ENCODE measurements at regions of chr2 and their contacts with region 1.

Region 1: DNA sequence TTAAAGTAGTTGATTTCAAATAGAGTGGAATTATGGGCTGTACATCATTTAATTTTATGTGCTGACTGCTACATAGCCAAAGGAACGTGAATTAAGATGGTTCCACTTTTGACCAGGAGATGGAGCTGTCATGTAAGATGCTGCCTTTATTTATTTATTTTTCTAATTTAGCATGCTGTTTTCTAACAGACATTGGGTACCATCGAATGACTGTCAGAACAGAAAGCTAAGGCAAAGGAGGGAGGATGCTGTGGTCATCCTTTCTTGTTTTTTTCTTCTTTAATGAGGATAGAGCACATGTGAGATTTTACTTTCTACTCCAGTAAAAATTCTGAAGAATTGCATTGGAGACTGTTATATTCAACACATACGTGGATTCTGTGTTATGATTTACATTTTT is at the start of gene SCN2A:
- DNase-seq: peak; percentile 35
- H3K4me3 ChIP-seq: no peak within 1 kb of the TSS
- H3K27ac ChIP-seq: no peak within 1 kb of the TSS
- H3K4me1 ChIP-seq: no peaks in the 10 kb centered on the region
- H3K27me3 ChIP-seq: no peaks in the 10 kb centered on the region
- CTCF ChIP-seq: peak; percentile 74 to 75
- total RNA-seq, gene SCN2A: 2.8 to 7.0 TPM

Region 2: DNA sequence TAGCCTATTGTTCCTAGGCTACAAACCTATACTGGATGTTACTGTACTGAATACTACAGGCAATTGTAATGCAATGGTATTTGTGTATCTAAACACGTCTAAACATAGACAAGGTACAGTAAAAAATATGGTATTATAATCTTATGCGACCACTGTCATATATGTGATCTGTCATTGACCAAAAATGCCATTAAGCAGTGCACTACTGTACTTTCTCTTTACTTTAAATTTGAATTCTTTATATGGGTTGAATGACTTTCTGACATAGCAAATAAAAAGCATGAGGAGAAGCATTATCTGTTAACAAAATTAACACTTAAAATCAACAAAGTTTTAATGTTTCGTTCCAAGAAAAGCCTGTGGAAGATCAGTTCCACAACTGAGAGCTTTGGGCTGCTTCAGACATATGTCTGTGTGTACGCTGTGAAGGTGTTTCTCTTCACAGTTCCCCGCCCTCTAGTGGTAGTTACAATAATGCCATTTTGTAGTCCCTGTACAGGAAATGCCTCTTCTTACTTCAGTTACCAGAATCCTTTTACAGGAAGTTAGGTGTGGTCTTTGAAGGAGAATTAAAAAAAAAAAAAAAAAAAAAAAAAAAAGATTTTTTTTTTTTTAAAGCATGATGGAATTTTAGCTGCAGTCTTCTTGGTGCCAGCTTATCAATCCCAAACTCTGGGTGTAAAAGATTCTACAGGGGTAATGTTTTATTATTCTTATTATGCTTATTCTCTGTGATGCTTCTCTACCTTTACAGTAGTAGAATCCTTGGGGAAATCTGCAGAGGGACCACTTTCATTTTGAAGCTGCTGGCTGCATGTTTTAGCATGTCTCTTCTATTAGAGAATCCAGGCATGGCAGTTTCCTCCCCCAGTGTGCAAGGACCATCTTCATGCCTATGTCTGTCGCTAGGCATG is 54.5 kb after region 1 on chr2:
- CTCF ChIA-PET with region 1: no interaction called
- dilution Hi-C with region 1: no loop called
- in situ Hi-C with region 1: no loop called
- intact Hi-C with region 1: loop called (anchors 1 kb)
- DNase-seq: peak; percentile 88
- H3K4me3 ChIP-seq: peak overlapping the region; percentile 62 to 95 (median 93)
- H3K27ac ChIP-seq: no peak overlapping the region
- H3K4me1 ChIP-seq: peaks cover 6% of the 10 kb centered on the region
- H3K27me3 ChIP-seq: no peaks in the 10 kb centered on the region
- CTCF ChIP-seq: peak; percentile 84 to 96

Region 3: GRCh38 chr2:165305391-165306096 is 66.3 kb after region 1 on chr2:
- CTCF ChIA-PET with region 1: no interaction called
- dilution Hi-C with region 1: no loop called
- in situ Hi-C with region 1: no loop called
- intact Hi-C with region 1: loop called (anchors 1 kb)
- DNase-seq: no peak
- H3K4me3 ChIP-seq: no peak overlapping the region
- H3K27ac ChIP-seq: no peak overlapping the region
- H3K4me1 ChIP-seq: no peaks in the 10 kb centered on the region
- H3K27me3 ChIP-seq: no peaks in the 10 kb centered on the region
- CTCF ChIP-seq: no peak